ENCODE measurements at regions of chr19 and their contacts with region 1.

Region 1: GRCh38 chr19:50025024-50025789 is at the start of gene VRK3:
- DNase-seq: peak; percentile 98
- ATAC-seq: peak; percentile 91
- H3K4me3 Mint-ChIP-seq: peak within 1 kb of the TSS; percentile 85
- H3K27ac Mint-ChIP-seq: peak within 1 kb of the TSS; percentile 95
- H3K4me1 Mint-ChIP-seq: peaks cover 44% of the 10 kb centered on the region
- H3K27me3 Mint-ChIP-seq: no peaks in the 10 kb centered on the region
- total RNA-seq, gene VRK3: 52.4 to 61.2 TPM

Region 2: DNA sequence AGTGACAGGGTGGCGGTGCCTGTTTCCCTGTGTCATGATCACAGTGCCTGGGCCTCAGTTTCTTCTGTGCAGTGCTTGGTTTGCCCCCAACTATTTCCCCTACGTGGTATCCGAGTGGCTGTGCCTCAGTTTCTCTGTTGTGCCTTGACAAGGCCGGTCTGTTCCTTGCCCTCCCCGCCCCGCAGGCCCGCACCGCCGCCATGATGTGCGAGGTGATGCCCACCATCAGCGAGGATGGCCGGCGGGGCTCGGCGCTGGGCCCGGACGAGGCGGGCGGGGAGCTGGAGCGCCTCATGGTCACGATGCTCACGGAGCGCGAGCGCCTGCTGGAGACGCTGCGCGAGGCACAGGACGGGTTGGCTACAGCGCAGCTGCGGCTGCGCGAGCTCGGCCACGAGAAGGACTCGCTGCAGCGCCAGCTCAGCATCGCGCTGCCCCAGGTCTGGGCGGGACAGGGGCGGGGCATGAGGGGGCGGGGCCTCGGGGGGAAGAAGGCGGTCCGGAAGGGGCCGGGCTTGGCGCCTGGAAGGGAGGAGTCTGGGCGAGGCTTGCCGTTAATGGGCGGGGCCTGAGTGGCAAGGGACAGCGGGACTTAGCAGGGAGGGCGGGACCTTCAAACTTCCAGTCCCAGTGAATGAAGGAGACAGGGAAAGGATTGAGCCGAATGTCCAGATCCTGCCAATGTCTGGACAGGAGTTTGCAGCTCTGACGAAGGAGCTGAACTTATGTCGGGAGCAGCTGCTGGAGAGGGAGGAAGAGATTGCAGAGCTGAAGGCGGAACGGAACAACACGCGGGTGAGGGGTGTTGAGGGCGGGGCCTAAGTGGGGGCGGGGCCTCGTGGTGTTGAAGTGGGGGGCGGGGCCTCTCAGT is 897.3 kb before region 1 on chr19:
- CTCF ChIA-PET with region 1: no interaction called
- POLR2A ChIA-PET with region 1: no interaction called
- intact Hi-C with region 1: loop called in 1 of 2 experiments (anchors 5 kb)
- DNase-seq: peak; percentile 98
- ATAC-seq: peak; percentile 95
- H3K4me3 Mint-ChIP-seq: peak overlapping the region; percentile 76
- H3K27ac Mint-ChIP-seq: peak overlapping the region; percentile 92
- H3K4me1 Mint-ChIP-seq: peaks cover 11% of the 10 kb centered on the region
- H3K27me3 Mint-ChIP-seq: no peaks in the 10 kb centered on the region

Region 3: DNA sequence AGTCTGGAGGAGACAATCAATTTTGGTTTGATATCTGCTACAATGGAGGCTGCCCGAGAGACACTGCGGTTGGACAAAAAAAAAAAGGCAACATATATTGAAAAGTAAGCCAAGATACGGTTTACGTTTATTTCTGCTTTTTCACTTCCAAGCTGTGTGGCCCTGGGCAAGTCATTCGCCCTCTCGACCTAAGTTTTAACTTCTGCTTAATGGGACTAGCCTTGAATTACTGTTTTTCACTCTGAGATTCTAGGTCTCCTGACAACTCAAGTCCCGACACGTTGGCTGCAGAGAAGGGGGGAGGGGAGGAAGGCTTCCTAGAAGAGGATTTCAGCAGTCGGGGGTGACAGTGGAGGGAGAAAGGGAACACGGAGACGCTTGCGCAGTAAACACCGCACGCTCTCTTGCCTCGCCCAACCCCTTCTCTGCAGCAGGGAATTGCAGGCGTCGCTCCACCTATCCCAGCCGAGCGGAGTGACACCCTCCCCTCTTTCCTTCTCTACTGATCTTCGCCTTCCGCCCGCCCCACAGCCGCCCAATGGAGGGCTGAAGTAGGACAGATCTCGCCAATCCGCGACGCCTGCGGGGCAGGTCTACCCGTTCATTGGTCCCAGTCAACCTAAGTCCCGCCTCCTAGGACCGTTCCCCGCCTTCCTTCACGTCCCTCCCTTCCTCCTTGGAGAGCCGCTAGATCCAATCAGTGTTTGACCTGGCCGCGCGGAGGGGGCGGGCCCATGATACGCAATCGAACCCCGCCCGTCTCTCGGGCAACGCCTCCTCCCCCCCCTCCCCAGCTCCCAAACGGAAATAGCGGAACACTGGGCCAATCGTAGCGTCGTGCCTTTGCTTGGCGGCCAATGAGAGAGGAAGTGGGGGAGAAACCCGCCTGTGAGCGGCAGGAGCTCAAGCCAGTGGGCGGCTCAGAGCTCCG is 258.9 kb before region 1 on chr19:
- CTCF ChIA-PET with region 1: no interaction called
- POLR2A ChIA-PET with region 1: interaction called, 3 read pairs
- intact Hi-C with region 1: loop called in 1 of 2 experiments (anchors 1 kb)
- DNase-seq: peak; percentile 99
- ATAC-seq: peak; percentile 93
- H3K4me3 Mint-ChIP-seq: peak overlapping the region; percentile 94
- H3K27ac Mint-ChIP-seq: peak overlapping the region; percentile 93
- H3K4me1 Mint-ChIP-seq: peaks cover 36% of the 10 kb centered on the region
- H3K27me3 Mint-ChIP-seq: no peaks in the 10 kb centered on the region

Region 4: GRCh38 chr19:49869441-49870176 is 155.6 kb before region 1 on chr19:
- CTCF ChIA-PET with region 1: no interaction called
- POLR2A ChIA-PET with region 1: no interaction called
- intact Hi-C with region 1: loop called in 1 of 2 experiments (anchors 1 kb)
- DNase-seq: peak; percentile 94
- ATAC-seq: peak; percentile 87
- H3K4me3 Mint-ChIP-seq: no peak overlapping the region
- H3K27ac Mint-ChIP-seq: no peak overlapping the region
- H3K4me1 Mint-ChIP-seq: peaks cover 39% of the 10 kb centered on the region
- H3K27me3 Mint-ChIP-seq: no peaks in the 10 kb centered on the region

Region 5: GRCh38 chr19:49983645-49984229 is 41.5 kb before region 1 on chr19:
- CTCF ChIA-PET with region 1: no interaction called
- POLR2A ChIA-PET with region 1: no interaction called
- intact Hi-C with region 1: loop called in 1 of 2 experiments (anchors 1 kb)
- DNase-seq: peak; percentile 90
- ATAC-seq: peak; percentile 82
- H3K4me3 Mint-ChIP-seq: no peak overlapping the region
- H3K27ac Mint-ChIP-seq: no peak overlapping the region
- H3K4me1 Mint-ChIP-seq: peaks cover 13% of the 10 kb centered on the region
- H3K27me3 Mint-ChIP-seq: no peaks in the 10 kb centered on the region

Region 6: DNA sequence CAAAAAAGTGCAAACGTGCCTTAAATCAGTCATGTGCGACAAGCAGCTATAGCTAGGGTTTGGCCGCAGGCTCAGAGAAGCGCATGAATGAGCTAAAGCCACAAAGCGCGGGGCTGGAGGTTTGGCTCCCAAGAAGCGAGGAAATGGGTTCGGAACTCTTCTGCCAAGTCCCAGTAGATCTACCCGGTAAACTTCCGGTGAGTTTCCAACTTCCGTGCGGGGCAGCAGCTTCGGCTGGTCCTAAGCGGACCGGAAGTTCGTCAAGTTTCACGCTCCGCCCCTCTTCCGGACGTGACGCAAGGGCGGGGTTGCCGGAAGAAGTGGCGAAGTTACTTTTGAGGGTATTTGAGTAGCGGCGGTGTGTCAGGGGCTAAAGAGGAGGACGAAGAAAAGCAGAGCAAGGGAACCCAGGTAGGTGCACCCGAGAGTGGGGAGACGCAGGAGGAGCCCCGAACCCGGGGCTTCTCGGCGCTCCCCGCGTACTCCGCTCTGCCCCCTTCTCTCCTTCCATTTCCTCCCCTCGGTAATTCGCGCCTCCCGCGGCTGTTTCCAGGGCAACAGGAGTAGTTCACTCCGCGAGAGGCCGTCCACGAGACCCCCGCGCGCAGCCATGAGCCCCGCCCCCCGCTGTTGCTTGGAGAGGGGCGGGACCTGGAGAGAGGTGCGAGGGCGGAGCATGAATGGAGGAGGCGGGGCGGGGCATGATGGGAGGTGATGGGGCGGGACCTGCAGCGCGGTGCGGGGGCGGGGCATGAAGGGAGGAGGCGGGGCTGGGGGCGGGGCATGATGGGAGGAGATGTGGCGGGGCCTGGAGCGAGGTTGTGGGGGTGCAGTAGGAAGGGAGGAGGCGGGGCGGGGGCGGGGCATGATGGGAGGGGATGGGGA is 351.2 kb after region 1 on chr19 and contains the start of gene NR1H2:
- CTCF ChIA-PET with region 1: no interaction called
- POLR2A ChIA-PET with region 1: no interaction called
- intact Hi-C with region 1: loop called in 1 of 2 experiments (anchors 1 kb)
- DNase-seq: peak; percentile 97
- ATAC-seq: peak; percentile 89
- H3K4me3 Mint-ChIP-seq: peak within 1 kb of the TSS; percentile 89
- H3K27ac Mint-ChIP-seq: peak within 1 kb of the TSS; percentile 97
- H3K4me1 Mint-ChIP-seq: peaks cover 21% of the 10 kb centered on the region
- H3K27me3 Mint-ChIP-seq: no peaks in the 10 kb centered on the region
- total RNA-seq, gene NR1H2: 50.3 to 53.6 TPM

Region 7: DNA sequence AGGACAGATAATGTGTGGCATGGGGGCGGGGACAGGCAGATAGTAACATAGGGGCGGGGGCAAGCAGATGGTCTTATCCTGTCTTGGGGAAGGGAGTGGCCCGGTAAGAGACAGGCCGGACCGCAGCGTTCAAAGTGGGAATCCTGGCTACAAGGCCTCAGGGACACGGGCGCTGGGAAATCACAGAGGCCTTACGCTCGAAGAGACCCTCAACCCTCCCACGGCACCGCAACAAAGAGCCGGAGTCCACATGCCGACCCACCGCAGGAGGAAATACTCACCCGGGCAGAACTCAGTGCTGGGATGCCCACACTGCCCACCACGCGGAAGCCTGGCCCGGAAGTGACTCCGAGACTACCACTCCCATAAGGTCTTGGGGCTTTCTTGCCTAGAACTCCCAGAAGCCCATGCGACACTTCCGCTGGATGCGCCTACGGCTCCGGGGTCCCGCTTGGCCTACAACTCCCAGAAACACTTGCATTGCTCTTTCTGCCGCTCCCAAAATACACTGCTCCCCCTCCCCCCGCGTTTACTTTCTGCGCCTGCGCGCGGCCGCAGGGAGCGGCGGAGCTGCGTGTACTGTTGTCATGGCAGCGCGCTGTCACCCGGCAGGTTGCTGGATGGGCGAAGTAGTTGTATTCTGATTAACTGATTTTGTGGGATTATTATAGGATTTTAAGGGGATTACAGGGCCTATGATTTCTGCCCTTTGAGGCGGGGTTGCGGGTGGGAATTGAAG is 1083.0 kb after region 1 on chr19 and contains the start of gene CTU1:
- CTCF ChIA-PET with region 1: no interaction called
- POLR2A ChIA-PET with region 1: no interaction called
- intact Hi-C with region 1: loop called in 1 of 2 experiments (anchors 1 kb)
- DNase-seq: peak; percentile 99
- ATAC-seq: peak; percentile 98
- H3K4me3 Mint-ChIP-seq: peak within 1 kb of the TSS; percentile 92
- H3K27ac Mint-ChIP-seq: peak within 1 kb of the TSS; percentile 91
- H3K4me1 Mint-ChIP-seq: peaks cover 36% of the 10 kb centered on the region
- H3K27me3 Mint-ChIP-seq: no peaks in the 10 kb centered on the region
- total RNA-seq, gene CTU1: 7.2 to 9.1 TPM

Measured in activated CD4-positive, alpha-beta T cell treated with anti-CD3 and anti-CD28 coated beads for 36 hours (primary cell).